ENCODE measurements at regions of chr5 and their contacts with region 1.

Region 1: GRCh38 chr5:138449501-138450239 is 10.8 kb downstream of the REEP2 start:
- DNase-seq: peak; percentile 91 to 95
- ATAC-seq: peak; percentile 93 to 99 (median 96)
- H3K4me3 ChIP-seq: no peak overlapping the region
- H3K27ac ChIP-seq: no peak overlapping the region
- H3K4me1 ChIP-seq: no peaks in the 10 kb centered on the region
- H3K27me3 ChIP-seq: no peaks in the 10 kb centered on the region
- CTCF ChIP-seq: peak; percentile 92

Region 2: GRCh38 chr5:138503487-138504270 is 54.0 kb after region 1 on chr5:
- intact Hi-C with region 1: loop called (anchors 1 to 2 kb)
- DNase-seq: no peak
- ATAC-seq: peak; percentile 76 to 88 (median 82)
- H3K4me3 ChIP-seq: no peak overlapping the region
- H3K27ac ChIP-seq: peak overlapping the region; percentile 27
- H3K4me1 ChIP-seq: peaks cover 8% of the 10 kb centered on the region
- H3K27me3 ChIP-seq: no peaks in the 10 kb centered on the region
- CTCF ChIP-seq: peak; percentile 73

Region 3: DNA sequence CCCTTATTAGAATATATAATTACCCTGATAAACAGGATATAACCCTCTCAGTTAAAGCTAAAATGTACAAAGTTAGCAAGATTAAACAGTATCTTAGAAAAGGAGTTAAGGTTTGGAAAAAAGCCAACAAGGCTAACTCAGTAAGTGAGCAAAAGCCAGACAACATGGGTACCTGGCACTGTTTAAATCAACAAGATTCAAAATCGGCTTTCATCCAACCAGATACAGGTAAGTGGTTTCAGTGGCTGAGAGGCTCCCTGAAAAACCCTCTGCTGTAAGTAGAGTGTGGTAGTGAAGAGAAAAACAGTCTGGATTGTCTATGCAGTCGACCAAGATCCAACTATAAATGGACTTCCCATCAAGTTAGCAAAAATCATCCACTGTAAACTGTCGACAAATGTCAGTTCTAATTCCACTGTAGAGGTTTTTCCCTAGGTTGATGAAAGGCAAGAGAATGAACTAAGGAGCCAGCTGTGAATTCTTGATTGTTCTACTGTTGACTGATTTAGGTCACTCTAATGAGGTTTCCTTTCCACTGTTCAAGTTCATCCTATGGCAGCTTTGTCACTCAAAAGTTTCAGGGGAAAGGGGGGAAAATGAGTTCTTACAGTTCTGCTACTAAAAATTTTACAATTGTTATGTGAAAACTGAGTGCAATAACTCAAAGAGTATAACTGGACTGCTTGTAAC is 66.0 kb after region 1 on chr5:
- intact Hi-C with region 1: no loop called
- DNase-seq: no peak
- ATAC-seq: no peak
- H3K4me3 ChIP-seq: no peak overlapping the region
- H3K27ac ChIP-seq: no peak overlapping the region
- H3K4me1 ChIP-seq: peaks cover 7% of the 10 kb centered on the region
- H3K27me3 ChIP-seq: no peaks in the 10 kb centered on the region
- CTCF ChIP-seq: no peak

Region 4: DNA sequence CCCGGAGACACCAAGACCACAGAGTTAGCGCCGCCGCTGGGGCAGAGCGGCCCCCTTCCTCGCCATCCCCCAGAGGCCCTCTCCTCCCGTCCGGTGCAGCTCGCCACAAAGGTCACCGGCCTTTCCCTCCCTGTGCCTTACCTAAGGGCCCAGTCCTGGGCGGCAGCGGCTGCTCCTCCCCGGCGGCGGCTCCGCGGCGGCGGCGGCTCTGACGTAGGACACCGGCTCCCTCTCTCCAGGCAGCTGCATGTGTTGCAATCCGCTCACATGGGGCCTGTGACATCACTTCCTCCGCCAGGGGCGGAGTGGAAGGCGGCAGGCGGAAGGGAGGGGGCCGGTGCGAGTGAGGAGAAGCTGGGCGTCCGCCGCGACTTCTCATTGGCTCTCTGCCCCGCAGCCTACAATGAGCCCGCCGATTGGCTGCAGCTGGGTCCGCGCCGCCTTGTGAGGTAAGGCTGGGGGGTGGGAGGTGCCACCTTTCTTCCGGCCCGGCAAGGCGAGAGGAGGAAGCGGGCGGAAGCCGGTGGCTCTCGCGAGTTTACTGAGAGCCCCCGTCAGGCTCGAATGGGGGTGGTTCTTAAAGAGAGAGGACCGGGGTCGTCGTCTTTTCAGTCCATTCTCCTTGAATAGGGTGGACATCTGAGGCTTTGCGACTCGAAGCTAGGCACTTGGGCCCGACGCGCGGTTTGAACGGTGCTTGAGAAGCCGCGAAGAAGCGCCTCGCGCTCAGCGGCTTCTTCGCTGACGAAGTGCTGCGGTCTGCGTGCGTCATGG is 93.5 kb after region 1 on chr5 and contains the start of gene ETF1:
- intact Hi-C with region 1: loop called in 1 of 2 experiments (anchors 5 kb)
- DNase-seq: peak; percentile 100
- ATAC-seq: peak; percentile 88 to 93 (median 90)
- H3K4me3 ChIP-seq: peak within 1 kb of the TSS; percentile 96
- H3K27ac ChIP-seq: peak within 1 kb of the TSS; percentile 99
- H3K4me1 ChIP-seq: peaks cover 61% of the 10 kb centered on the region
- H3K27me3 ChIP-seq: no peaks in the 10 kb centered on the region
- CTCF ChIP-seq: no peak
- total RNA-seq, gene ETF1: 84.2 to 174 (median 150) TPM

Measured in psoas muscle (tissue), 8 donors.